ENCODE measurements at regions of chr2 and their contacts with region 1.

Region 1: GRCh38 chr2:164903204-164903603 is 52.1 kb downstream of the SLC38A11 start:
- DNase-seq: no peak
- H3K4me3 Mint-ChIP-seq: no peak overlapping the region
- H3K27ac Mint-ChIP-seq: no peak overlapping the region
- H3K4me1 Mint-ChIP-seq: peaks cover 46% of the 10 kb centered on the region
- H3K27me3 Mint-ChIP-seq: no peaks in the 10 kb centered on the region
- CTCF ChIP-seq: no peak

Region 2: GRCh38 chr2:164739966-164740365 is 163.2 kb before region 1 on chr2:
- CTCF ChIA-PET with region 1: no interaction called
- intact Hi-C with region 1: no loop called
- DNase-seq: no peak
- H3K4me3 Mint-ChIP-seq: no peak overlapping the region
- H3K27ac Mint-ChIP-seq: no peak overlapping the region
- H3K4me1 Mint-ChIP-seq: peaks cover 58% of the 10 kb centered on the region
- H3K27me3 Mint-ChIP-seq: no peaks in the 10 kb centered on the region
- CTCF ChIP-seq: no peak

Region 3: DNA sequence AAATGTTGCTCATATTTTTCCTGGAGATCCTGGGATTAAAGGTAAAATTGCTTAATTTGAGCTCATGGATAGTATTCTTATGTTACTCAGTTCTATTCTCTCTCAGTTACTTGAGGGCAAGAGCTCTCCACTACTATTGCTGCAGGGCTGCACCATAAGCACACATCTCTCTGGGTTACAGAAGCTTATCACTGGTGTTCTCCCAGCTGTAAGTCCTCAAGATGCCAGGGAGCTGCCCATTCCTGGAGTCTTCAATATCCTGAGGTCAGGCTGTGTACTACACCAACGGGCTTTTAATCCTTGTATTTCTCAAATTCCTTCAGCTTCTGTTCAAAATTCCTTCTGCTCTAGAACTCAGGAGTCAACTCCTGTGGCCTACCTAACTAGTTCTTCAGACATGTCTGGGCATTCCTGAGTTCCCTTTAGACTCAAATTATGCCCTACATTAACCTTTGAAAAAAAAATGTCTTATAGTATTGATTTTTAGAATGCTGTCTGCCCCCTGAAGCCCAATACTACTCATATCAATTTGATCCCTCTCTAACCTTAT is 43.9 kb before region 1 on chr2:
- CTCF ChIA-PET with region 1: interaction called, 3 read pairs
- intact Hi-C with region 1: loop called (anchors 2 kb)
- DNase-seq: no peak
- H3K4me3 Mint-ChIP-seq: no peak overlapping the region
- H3K27ac Mint-ChIP-seq: peak overlapping the region; percentile 82
- H3K4me1 Mint-ChIP-seq: peaks cover 33% of the 10 kb centered on the region
- H3K27me3 Mint-ChIP-seq: no peaks in the 10 kb centered on the region
- CTCF ChIP-seq: no peak

Region 4: GRCh38 chr2:164917296-164917903 is 14.2 kb after region 1 on chr2:
- CTCF ChIA-PET with region 1: interaction called, 14 read pairs
- intact Hi-C with region 1: no loop called
- DNase-seq: peak; percentile 62
- H3K4me3 Mint-ChIP-seq: no peak overlapping the region
- H3K27ac Mint-ChIP-seq: no peak overlapping the region
- H3K4me1 Mint-ChIP-seq: peaks cover 32% of the 10 kb centered on the region
- H3K27me3 Mint-ChIP-seq: no peaks in the 10 kb centered on the region
- CTCF ChIP-seq: peak; percentile 49

Region 5: DNA sequence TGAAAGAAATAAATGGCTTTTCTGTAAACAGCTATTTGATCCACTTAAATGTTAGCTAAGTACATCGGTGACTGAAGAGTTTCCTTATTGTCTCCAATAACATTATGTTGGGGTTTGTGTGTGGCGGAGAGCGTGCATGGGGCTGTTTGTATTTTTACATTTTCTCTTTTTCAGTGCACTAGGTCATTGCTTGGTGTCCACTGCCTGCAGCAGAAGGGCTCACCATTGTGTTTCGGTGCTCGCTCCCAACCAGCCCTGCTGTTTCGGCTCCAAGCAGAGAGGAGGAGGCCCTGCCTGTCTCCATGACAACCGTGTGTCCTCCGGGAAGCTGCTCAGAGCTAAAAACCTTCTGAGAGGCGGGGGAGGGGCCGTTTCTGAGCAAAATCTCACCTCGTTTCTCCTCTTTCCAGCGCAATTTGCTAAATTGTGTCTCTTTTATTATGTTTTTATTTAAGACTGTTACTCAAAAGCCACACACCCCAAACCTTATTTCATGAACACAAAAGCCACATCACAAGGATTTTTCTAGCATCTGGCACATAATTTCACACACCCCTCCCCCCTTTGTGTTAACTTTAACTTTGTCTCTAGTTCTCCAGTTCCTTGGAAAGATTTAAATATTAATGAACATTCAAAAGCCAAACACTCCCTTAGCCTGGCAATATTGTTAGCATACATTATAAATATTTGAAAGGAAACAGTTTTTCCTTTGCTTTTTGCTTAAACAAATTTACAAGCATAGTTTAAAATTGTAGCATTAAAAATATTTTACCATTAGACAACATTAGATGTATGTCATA is 165.0 kb after region 1 on chr2:
- CTCF ChIA-PET with region 1: no interaction called
- intact Hi-C with region 1: no loop called
- DNase-seq: peak; percentile 60
- H3K4me3 Mint-ChIP-seq: peak overlapping the region; percentile 58
- H3K27ac Mint-ChIP-seq: peak overlapping the region; percentile 67
- H3K4me1 Mint-ChIP-seq: peaks cover 18% of the 10 kb centered on the region
- H3K27me3 Mint-ChIP-seq: no peaks in the 10 kb centered on the region
- CTCF ChIP-seq: no peak